Common myeloid progenitor, CD34-positive (primary cell): ENCODE measurements at regions of chr7 and their contacts with region 1.

Region 1: GRCh38 chr7:74183613-74184450 is 9.7 kb downstream of the EIF4H start:
- DNase-seq: peak; percentile 37 to 45 (median 39)
- H3K4me3 ChIP-seq: no peak overlapping the region
- H3K27ac ChIP-seq: no peak overlapping the region
- H3K4me1 ChIP-seq: peaks cover 20 to 44% (median 34%) of the 10 kb centered on the region in 4 experiments
- H3K27me3 ChIP-seq: no peaks in the 10 kb centered on the region

Region 2: DNA sequence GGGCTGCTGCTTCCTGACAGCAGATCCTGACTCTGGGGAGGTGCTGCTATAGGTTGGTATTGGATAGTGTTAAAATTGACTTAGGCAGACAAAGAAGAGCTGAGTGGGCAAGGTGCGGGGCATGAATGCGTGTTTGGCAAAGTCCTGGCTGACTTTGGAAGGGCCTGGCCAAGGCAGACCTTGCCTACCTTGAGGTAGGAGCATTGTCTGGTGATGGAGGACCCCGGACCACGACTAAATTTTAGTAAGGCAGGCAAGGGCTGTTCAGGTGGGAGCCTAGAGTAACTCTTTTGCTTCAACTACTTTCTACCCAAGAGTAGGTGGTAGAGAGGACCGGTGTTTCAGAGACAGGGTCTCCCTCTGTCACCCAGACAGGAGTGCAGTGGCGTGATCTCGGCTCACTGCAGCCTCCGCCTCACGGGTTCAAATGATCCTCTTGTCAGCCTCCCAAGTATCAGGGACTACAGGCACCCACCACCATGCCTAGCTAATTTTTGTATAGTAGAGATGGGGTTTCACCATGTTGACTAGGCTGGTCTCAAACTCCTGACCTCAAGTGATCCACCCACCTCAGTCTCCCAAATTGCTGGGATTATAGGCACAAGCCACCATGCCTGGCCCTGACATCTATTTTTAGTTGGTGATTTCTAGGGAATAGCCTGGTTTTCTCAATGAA is 13.8 kb after region 1 on chr7:
- CTCF ChIA-PET with region 1: interaction called, 25 read pairs
- POLR2A ChIA-PET with region 1: interaction called, 3 read pairs
- DNase-seq: no peak
- H3K4me3 ChIP-seq: no peak overlapping the region
- H3K27ac ChIP-seq: no peak overlapping the region
- H3K4me1 ChIP-seq: peaks cover 0 to 27% (median 18%) of the 10 kb centered on the region in 4 experiments
- H3K27me3 ChIP-seq: no peaks in the 10 kb centered on the region